ENCODE measurements at regions of chr11 and their contacts with region 1.

Region 1: DNA sequence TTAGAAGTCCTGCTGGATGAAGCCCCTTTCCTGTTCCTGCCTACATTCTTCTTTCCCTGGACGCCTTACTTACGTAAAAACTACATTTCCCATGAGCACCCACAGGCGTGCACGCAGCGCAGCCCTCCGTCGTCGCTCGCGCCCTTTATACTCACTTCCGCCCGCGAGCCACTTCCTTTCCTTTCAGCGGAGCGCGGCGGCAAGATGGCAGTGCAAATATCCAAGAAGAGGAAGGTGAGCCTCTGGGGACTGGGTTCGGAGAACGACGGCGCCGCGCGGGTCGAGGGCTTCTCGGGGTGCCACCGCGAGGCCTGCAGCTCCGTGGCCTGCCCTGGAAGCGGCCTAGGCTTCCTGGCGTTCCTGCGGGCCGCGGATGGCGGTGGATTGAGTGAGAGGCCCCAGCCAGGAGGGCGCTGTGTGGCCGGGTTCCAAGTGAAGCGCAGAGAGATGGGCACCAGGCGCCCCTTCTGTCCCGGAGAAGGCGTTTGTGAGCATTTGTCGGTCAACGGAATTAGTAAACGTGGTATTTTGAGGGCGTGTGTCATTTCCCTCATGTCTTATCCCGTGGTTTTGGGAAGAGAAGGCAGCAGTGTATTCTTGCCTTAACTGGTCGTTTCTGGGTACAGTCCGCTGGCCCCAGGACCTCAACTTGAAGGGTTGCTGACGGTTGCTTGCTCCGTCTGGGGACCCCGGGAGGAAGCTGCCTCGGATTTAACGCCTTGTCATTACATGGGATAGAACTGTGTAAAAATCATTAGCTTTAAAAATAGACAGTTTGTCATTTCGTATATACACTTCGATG is at the start of gene RPS3:
- DNase-seq: peak; percentile 87 to 89 (median 88)
- H3K4me3 ChIP-seq: peak within 1 kb of the TSS; percentile 71 to 93
- H3K4me3 Mint-ChIP-seq: peak within 1 kb of the TSS; percentile 88 to 98 (median 96)
- H3K27ac ChIP-seq: peak within 1 kb of the TSS; percentile 83
- H3K27ac Mint-ChIP-seq: peak within 1 kb of the TSS; percentile 96 to 99 (median 98)
- H3K4me1 ChIP-seq: peaks cover 38% of the 10 kb centered on the region
- H3K4me1 Mint-ChIP-seq: peaks cover 31 to 55% (median 40%) of the 10 kb centered on the region in 4 donors
- H3K27me3 ChIP-seq: no peaks in the 10 kb centered on the region
- H3K27me3 Mint-ChIP-seq: peaks cover 0 to 1% of the 10 kb centered on the region in 2 donors
- total RNA-seq, gene RPS3: 4,846 to 5,053 TPM

Region 2: DNA sequence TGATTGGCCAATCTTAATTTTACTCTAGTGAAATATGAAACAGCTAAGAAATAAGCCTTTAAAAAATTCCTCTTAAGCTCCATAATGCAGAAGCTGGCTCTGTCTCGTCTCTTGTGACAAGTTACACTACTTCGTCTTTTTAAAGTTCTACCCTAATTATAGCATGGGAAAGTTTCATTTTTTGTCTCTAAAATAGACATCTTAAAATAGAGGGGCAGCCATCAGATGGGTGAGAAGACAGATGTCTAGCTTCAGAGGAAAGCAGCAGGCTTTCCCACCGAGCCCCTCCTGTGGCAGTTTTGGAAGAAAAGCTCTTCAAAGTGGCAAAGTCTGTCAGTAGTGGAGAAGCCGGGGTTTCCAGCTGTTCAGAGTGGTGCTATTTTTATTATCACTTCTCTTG is 490.2 kb before region 1 on chr11:
- CTCF ChIA-PET with region 1: no interaction called
- POLR2A ChIA-PET with region 1: no interaction called
- intact Hi-C with region 1: no loop called
- DNase-seq: no peak
- H3K4me3 ChIP-seq: no peak overlapping the region
- H3K4me3 Mint-ChIP-seq: no peak overlapping the region
- H3K27ac ChIP-seq: no peak overlapping the region
- H3K27ac Mint-ChIP-seq: no peak overlapping the region
- H3K4me1 ChIP-seq: no peaks in the 10 kb centered on the region
- H3K4me1 Mint-ChIP-seq: peaks cover 0 to 17% (median 0%) of the 10 kb centered on the region in 4 donors
- H3K27me3 ChIP-seq: no peaks in the 10 kb centered on the region
- H3K27me3 Mint-ChIP-seq: no peaks in the 10 kb centered on the region

Region 3: DNA sequence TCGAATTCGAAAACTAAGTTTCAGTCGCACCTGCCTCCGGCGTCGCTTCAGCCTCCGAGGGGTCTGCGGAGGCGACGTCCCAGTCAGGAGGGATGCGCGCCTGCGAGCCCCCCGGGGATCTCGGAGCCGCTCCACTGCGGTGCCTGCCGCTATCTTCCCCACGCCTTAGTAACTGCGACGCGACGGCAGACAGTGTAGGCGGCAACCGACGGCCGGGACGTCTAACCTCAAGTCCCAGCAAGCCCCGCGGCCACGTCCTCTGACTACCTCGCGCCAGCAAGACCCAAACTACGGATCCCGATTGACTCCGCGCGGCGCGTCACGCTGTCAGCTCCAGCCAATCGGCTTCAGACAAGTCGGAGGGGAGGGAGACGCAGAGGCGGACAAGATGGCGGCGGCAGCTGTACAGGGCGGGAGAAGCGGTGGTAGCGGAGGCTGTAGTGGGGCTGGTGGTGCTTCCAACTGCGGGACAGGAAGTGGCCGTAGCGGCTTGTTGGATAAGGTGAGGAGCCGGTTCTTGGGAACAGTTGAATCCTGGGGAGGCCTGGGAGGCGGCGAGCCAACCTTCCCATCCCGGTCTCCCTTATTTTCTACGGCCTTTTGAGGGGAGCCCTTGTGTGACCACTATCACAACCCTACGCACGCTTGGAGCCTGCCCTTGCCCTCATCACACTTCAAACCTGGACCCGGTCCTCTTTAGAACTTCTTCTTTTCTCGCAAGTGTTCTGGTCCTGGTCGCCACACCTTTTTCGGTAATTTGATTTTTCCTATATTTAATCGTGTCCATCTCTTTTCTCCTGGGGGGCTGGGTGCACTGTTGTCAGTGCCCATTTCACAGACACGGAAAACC is 450.4 kb before region 1 on chr11 and contains the starts of genes SPCS2 and XRRA1:
- CTCF ChIA-PET with region 1: no interaction called
- POLR2A ChIA-PET with region 1: interaction called, 4 read pairs
- intact Hi-C with region 1: loop called (anchors 1 kb)
- DNase-seq: peak; percentile 96 to 99 (median 97)
- H3K4me3 ChIP-seq: peak within 1 kb of the TSS; percentile 78 to 100
- H3K4me3 Mint-ChIP-seq: peak within 1 kb of the TSS; percentile 93 to 100 (median 98)
- H3K27ac ChIP-seq: peak within 1 kb of the TSS; percentile 89
- H3K27ac Mint-ChIP-seq: peak within 1 kb of the TSS; percentile 93 to 100 (median 96)
- H3K4me1 ChIP-seq: peaks cover 52% of the 10 kb centered on the region
- H3K4me1 Mint-ChIP-seq: peaks cover 38 to 56% (median 53%) of the 10 kb centered on the region in 4 donors
- H3K27me3 ChIP-seq: no peaks in the 10 kb centered on the region
- H3K27me3 Mint-ChIP-seq: no peaks in the 10 kb centered on the region
- total RNA-seq, gene SPCS2: 145 to 148 TPM
- total RNA-seq, gene XRRA1: 18.8 to 21.1 TPM

Region 4: DNA sequence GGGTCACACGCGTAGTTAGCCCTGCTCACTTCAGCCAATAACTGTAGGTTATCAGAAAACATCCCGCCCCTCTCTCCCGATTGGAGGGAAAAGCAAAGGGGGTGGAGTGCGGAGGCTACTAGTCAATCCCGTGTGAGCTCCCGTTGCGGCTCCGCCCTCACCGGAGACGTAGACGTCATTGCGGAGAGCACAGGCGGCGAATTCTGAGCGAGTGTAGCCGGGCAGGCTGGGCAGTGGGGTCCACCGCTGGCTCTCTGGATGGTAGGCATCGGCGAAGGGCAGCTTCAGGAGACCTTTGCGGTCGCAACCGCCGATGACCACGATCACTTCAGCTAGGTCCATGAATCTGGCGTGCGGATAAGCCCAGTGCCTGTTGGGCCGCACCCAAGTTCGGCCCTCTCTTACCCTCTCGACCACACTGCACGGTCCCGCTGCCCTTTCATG is 28.8 kb after region 1 on chr11:
- CTCF ChIA-PET with region 1: interaction called, 5 read pairs
- POLR2A ChIA-PET with region 1: interaction called, 39 read pairs
- intact Hi-C with region 1: loop called (anchors 1 kb)
- DNase-seq: peak; percentile 46 to 82 (median 55)
- H3K4me3 ChIP-seq: peak overlapping the region in 1 of 2 donors; percentile 16
- H3K4me3 Mint-ChIP-seq: peak overlapping the region in 7 of 8 donors; percentile 10 to 82 (median 65)
- H3K27ac ChIP-seq: no peak overlapping the region
- H3K27ac Mint-ChIP-seq: peak overlapping the region; percentile 57 to 90 (median 68)
- H3K4me1 ChIP-seq: peaks cover 25% of the 10 kb centered on the region
- H3K4me1 Mint-ChIP-seq: peaks cover 14 to 42% (median 22%) of the 10 kb centered on the region in 4 donors
- H3K27me3 ChIP-seq: peaks cover 6% of the 10 kb centered on the region
- H3K27me3 Mint-ChIP-seq: peaks cover 7 to 24% of the 10 kb centered on the region in 2 donors

Region 5: DNA sequence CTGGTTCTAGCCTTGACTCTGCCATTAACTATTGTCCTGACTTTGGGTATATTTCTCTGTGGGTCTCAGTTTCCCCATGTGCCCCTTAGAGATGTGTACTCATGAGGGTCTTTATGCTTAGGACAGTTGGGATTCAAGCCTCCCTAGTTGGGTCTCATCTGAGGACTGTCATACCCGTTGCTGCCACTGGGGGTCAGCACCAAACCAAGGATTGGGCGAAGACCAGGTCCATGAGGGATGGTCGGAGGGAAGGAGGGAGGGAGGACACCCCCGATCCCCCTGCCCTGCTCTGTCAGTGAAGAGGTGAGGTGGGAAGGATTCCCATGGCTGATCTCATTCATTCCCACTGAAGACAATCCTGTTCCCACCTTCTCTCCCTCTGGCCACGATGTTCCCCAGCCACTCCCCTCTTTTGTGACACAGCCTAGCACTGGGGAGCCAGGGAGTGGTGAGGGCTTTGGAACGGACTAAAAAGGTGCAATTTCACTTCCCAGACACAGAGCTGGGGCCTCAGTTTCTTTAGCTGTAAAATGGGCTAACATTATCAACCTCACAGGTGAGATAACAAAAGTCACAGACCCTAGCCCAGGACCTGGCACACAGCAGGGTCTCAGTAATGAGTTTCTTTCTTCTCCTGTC is 45.9 kb after region 1 on chr11:
- CTCF ChIA-PET with region 1: interaction called, 11 read pairs
- POLR2A ChIA-PET with region 1: no interaction called
- intact Hi-C with region 1: no loop called
- DNase-seq: peak; percentile 54 to 72 (median 63)
- H3K4me3 ChIP-seq: no peak overlapping the region
- H3K4me3 Mint-ChIP-seq: no peak overlapping the region
- H3K27ac ChIP-seq: no peak overlapping the region
- H3K27ac Mint-ChIP-seq: peak overlapping the region in 3 of 7 donors; percentile 29 to 45 (median 29)
- H3K4me1 ChIP-seq: peaks cover 5% of the 10 kb centered on the region
- H3K4me1 Mint-ChIP-seq: peaks cover 0 to 7% (median 3%) of the 10 kb centered on the region in 4 donors
- H3K27me3 ChIP-seq: no peaks in the 10 kb centered on the region
- H3K27me3 Mint-ChIP-seq: no peaks in the 10 kb centered on the region

Region 6: GRCh38 chr11:75562048-75562835 is 162.7 kb after region 1 on chr11 and contains the start of gene SERPINH1:
- CTCF ChIA-PET with region 1: no interaction called
- POLR2A ChIA-PET with region 1: interaction called, 11 read pairs
- intact Hi-C with region 1: no loop called
- DNase-seq: peak; percentile 43 to 67 (median 49)
- H3K4me3 ChIP-seq: peak within 1 kb of the TSS; percentile 86 to 96
- H3K4me3 Mint-ChIP-seq: peak within 1 kb of the TSS; percentile 93 to 99 (median 99)
- H3K27ac ChIP-seq: peak within 1 kb of the TSS; percentile 71
- H3K27ac Mint-ChIP-seq: peak within 1 kb of the TSS; percentile 91 to 98 (median 96)
- H3K4me1 ChIP-seq: peaks cover 20% of the 10 kb centered on the region
- H3K4me1 Mint-ChIP-seq: peaks cover 12 to 49% (median 33%) of the 10 kb centered on the region in 4 donors
- H3K27me3 ChIP-seq: no peaks in the 10 kb centered on the region
- H3K27me3 Mint-ChIP-seq: no peaks in the 10 kb centered on the region
- total RNA-seq, gene SERPINH1: 15.6 to 16.2 TPM